ENCODE measurements at regions of chr15 and their contacts with region 1.

Region 1: GRCh38 chr15:56491110-56491722 is 26.3 kb upstream of the MNS1 start:
- DNase-seq: peak in 1 of 2 donors; percentile 73
- H3K4me3 ChIP-seq: no peak overlapping the region
- H3K27ac ChIP-seq: no peak overlapping the region
- H3K4me1 ChIP-seq: no peaks in the 10 kb centered on the region
- H3K27me3 ChIP-seq: no peaks in the 10 kb centered on the region
- CTCF ChIP-seq: peak; percentile 27 to 81 (median 67)

Region 2: GRCh38 chr15:56772868-56773639 is 281.8 kb after region 1 on chr15:
- intact Hi-C with region 1: loop called (anchors 10 kb)
- DNase-seq: no peak
- H3K4me3 ChIP-seq: no peak overlapping the region
- H3K27ac ChIP-seq: no peak overlapping the region
- H3K4me1 ChIP-seq: no peaks in the 10 kb centered on the region
- H3K27me3 ChIP-seq: no peaks in the 10 kb centered on the region
- CTCF ChIP-seq: no peak

Region 3: DNA sequence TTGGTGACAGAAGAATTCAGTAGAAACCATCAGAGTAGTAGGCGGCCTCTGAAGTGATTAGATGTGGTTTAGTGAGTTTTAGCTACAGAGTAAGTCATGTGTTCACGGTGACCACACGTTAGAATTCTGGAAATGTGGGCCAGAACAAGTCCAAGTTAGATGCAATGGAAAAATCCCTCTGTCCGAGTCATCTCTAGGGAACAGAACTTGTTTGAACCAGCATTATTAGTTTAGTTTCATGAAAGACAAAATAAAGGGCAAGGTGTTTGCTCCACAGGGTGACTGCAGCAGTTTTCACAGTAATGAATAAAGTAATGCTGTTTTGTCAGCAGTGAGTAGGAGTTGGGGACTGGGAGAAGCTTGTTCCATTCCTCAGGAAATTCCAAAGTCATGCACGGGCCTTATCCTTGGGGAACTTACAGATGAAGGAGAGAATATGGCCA is 985.3 kb after region 1 on chr15:
- intact Hi-C with region 1: no loop called
- DNase-seq: no peak
- H3K4me3 ChIP-seq: no peak overlapping the region
- H3K27ac ChIP-seq: peak overlapping the region; percentile 51 to 65
- H3K4me1 ChIP-seq: peaks cover 0 to 9% of the 10 kb centered on the region in 2 donors
- H3K27me3 ChIP-seq: no peaks in the 10 kb centered on the region
- CTCF ChIP-seq: no peak

Region 4: DNA sequence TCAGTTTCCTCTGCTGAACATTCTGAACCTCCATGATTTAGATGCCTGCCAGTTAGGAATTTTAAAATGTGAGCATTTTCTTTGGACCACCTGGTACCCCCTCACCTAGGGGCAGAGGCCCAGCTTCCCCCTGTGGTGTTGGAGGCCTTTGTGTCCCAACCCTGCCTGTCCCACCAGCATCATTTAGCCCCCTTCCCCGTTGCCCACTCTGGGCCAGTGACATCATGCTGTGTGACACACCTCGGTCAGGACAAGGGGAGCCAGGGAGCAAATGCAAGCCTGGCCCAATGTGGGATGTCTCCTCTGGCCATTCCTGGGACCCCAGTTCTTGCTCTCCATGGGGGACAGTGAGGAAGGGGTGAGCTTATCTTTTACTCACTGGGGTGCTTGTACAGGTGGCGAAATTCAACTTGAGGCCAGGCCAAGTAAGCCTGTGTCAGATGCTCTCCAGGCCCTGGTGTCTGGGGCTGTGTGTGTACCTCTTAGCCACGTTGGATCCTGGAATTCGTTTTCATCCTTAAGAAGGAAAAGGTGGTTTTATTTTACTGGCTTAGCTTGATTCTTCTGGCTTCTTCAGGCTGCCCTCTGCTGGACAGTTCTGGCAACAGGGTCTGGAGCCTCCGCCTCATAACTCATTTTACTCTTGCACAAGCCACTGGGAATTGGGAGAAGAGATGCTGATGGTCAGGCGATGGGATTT is 1050.7 kb after region 1 on chr15:
- intact Hi-C with region 1: loop called (anchors 10 kb)
- DNase-seq: peak in 1 of 2 donors; percentile 84
- H3K4me3 ChIP-seq: no peak overlapping the region
- H3K27ac ChIP-seq: no peak overlapping the region
- H3K4me1 ChIP-seq: peaks cover 4 to 10% of the 10 kb centered on the region in 2 donors
- H3K27me3 ChIP-seq: no peaks in the 10 kb centered on the region
- CTCF ChIP-seq: peak; percentile 48 to 86 (median 65)